GM13976 (cell line): ENCODE measurements at regions of chr10 and their contacts with region 1.

Region 1: GRCh38 chr10:68301790-68302502 is 29.9 kb upstream of the HNRNPH3 start:
- DNase-seq: peak; percentile 55
- CTCF ChIP-seq: peak; percentile 34

Region 2: GRCh38 chr10:68212721-68213352 is 89.1 kb before region 1 on chr10:
- in situ Hi-C with region 1: loop called (anchors 10 kb)
- DNase-seq: peak; percentile 47
- CTCF ChIP-seq: peak; percentile 22

Region 3: GRCh38 chr10:68251625-68252495 is 50.1 kb before region 1 on chr10:
- in situ Hi-C with region 1: no loop called
- DNase-seq: peak; percentile 32
- CTCF ChIP-seq: no peak